ENCODE measurements at regions of chr9 and their contacts with region 1.

Region 1: DNA sequence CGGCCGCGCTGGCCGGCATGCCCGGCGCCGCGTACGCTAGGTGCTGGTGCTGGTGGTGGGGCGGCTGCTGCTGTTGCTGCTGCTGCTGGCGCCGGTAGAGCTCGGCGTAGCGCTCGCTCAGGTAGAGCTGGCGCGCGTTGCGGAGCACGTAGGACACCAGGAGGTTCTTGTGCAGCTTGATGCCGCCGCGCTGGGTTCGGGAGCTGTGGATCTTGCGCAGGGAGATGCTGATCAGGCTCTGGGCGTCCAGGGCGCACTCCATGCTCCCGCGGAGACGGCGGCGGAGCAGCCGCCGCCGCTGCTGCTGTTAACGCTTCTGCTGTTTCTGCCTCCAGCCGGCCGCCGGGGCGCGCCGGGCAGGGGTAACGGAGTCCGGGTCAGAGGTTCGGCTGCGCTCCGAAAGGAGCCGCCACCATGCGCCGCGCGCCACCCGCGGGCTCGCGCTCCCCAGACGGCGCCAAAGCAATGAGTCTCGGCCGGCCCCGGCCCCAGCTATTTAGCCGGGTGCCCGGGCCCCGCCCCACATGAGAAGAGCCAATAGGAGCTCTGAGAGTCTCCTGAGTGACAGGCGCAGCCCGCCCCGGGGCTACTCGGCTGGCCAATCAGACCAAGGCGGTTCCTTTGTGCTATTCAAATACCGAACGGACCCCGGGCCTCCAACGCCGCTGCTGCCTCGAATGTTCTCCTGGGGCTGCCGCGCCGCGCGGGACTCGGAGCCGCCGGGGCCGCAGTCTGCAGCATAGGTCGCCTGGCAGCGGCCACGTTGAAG is at the start of gene IER5L:
- DNase-seq: peak; percentile 92 to 96 (median 94)
- H3K4me3 ChIP-seq: peak within 1 kb of the TSS; percentile 93 to 98 (median 97)
- H3K4me3 Mint-ChIP-seq: peak within 1 kb of the TSS; percentile 98
- H3K27ac ChIP-seq: peak within 1 kb of the TSS in 1 of 2 donors; percentile 88
- H3K27ac Mint-ChIP-seq: peak within 1 kb of the TSS; percentile 54 to 94 (median 84)
- H3K4me1 ChIP-seq: peaks cover 27 to 36% of the 10 kb centered on the region in 2 donors
- H3K4me1 Mint-ChIP-seq: peaks cover 16% of the 10 kb centered on the region
- H3K27me3 ChIP-seq: peaks cover 0 to 8% of the 10 kb centered on the region in 2 donors
- H3K27me3 Mint-ChIP-seq: peaks cover 9 to 17% (median 16%) of the 10 kb centered on the region in 3 donors
- CTCF ChIP-seq: no peak
- polyA plus RNA-seq, gene IER5L: 0.36 to 15.5 (median 0.79) TPM

Region 2: GRCh38 chr9:129028192-129028957 is 149.6 kb before region 1 on chr9 and contains the start of gene SH3GLB2:
- intact Hi-C with region 1: no loop called
- DNase-seq: peak; percentile 92 to 97 (median 95)
- H3K4me3 ChIP-seq: peak within 1 kb of the TSS; percentile 47 to 78 (median 65)
- H3K4me3 Mint-ChIP-seq: peak within 1 kb of the TSS; percentile 71 to 85
- H3K27ac ChIP-seq: no peak within 1 kb of the TSS
- H3K27ac Mint-ChIP-seq: peak within 1 kb of the TSS in 1 of 7 donors; percentile 26
- H3K4me1 ChIP-seq: peaks cover 12 to 24% of the 10 kb centered on the region in 2 donors
- H3K4me1 Mint-ChIP-seq: peaks cover 20% of the 10 kb centered on the region
- H3K27me3 ChIP-seq: no peaks in the 10 kb centered on the region
- H3K27me3 Mint-ChIP-seq: no peaks in the 10 kb centered on the region
- CTCF ChIP-seq: peak; percentile 83
- polyA plus RNA-seq, gene SH3GLB2: 8.0 to 77.0 (median 25.9) TPM

Region 3: GRCh38 chr9:129139993-129140396 is 38.0 kb before region 1 on chr9:
- intact Hi-C with region 1: loop called (anchors 2 to 5 kb)
- DNase-seq: peak; percentile 94 to 98 (median 95)
- H3K4me3 ChIP-seq: peak overlapping the region; percentile 27 to 73 (median 32)
- H3K4me3 Mint-ChIP-seq: peak overlapping the region; percentile 79 to 92
- H3K27ac ChIP-seq: peak overlapping the region; percentile 97 to 99
- H3K27ac Mint-ChIP-seq: peak overlapping the region; percentile 96 to 98 (median 97)
- H3K4me1 ChIP-seq: peaks cover 37 to 47% of the 10 kb centered on the region in 2 donors
- H3K4me1 Mint-ChIP-seq: peaks cover 41% of the 10 kb centered on the region
- H3K27me3 ChIP-seq: no peaks in the 10 kb centered on the region
- H3K27me3 Mint-ChIP-seq: peaks cover 0 to 2% (median 0%) of the 10 kb centered on the region in 3 donors
- CTCF ChIP-seq: no peak

Region 4: GRCh38 chr9:129258124-129258822 is 80.3 kb after region 1 on chr9:
- intact Hi-C with region 1: loop called in 1 of 2 experiments (anchors 5 kb)
- DNase-seq: peak; percentile 85 to 94 (median 89)
- H3K4me3 ChIP-seq: peak overlapping the region in 1 of 3 experiments; percentile 60
- H3K4me3 Mint-ChIP-seq: peak overlapping the region; percentile 57 to 81
- H3K27ac ChIP-seq: no peak overlapping the region
- H3K27ac Mint-ChIP-seq: peak overlapping the region in 3 of 7 donors; percentile 15 to 75 (median 63)
- H3K4me1 ChIP-seq: peaks cover 28 to 31% of the 10 kb centered on the region in 2 donors
- H3K4me1 Mint-ChIP-seq: peaks cover 33% of the 10 kb centered on the region
- H3K27me3 ChIP-seq: peaks cover 9 to 22% of the 10 kb centered on the region in 2 donors
- H3K27me3 Mint-ChIP-seq: peaks cover 27 to 40% (median 27%) of the 10 kb centered on the region in 3 donors
- CTCF ChIP-seq: no peak

Region 5: GRCh38 chr9:129320575-129321263 is 142.7 kb after region 1 on chr9:
- intact Hi-C with region 1: loop called in 1 of 2 experiments (anchors 10 kb)
- DNase-seq: peak; percentile 77 to 90 (median 79)
- H3K4me3 ChIP-seq: peak overlapping the region; percentile 54 to 82 (median 55)
- H3K4me3 Mint-ChIP-seq: peak overlapping the region; percentile 86 to 96
- H3K27ac ChIP-seq: peak overlapping the region; percentile 49 to 94
- H3K27ac Mint-ChIP-seq: peak overlapping the region; percentile 90 to 99 (median 95)
- H3K4me1 ChIP-seq: peaks cover 34 to 52% of the 10 kb centered on the region in 2 donors
- H3K4me1 Mint-ChIP-seq: peaks cover 56% of the 10 kb centered on the region
- H3K27me3 ChIP-seq: no peaks in the 10 kb centered on the region
- H3K27me3 Mint-ChIP-seq: peaks cover 0 to 3% (median 1%) of the 10 kb centered on the region in 3 donors
- CTCF ChIP-seq: peak; percentile 43

Region 6: DNA sequence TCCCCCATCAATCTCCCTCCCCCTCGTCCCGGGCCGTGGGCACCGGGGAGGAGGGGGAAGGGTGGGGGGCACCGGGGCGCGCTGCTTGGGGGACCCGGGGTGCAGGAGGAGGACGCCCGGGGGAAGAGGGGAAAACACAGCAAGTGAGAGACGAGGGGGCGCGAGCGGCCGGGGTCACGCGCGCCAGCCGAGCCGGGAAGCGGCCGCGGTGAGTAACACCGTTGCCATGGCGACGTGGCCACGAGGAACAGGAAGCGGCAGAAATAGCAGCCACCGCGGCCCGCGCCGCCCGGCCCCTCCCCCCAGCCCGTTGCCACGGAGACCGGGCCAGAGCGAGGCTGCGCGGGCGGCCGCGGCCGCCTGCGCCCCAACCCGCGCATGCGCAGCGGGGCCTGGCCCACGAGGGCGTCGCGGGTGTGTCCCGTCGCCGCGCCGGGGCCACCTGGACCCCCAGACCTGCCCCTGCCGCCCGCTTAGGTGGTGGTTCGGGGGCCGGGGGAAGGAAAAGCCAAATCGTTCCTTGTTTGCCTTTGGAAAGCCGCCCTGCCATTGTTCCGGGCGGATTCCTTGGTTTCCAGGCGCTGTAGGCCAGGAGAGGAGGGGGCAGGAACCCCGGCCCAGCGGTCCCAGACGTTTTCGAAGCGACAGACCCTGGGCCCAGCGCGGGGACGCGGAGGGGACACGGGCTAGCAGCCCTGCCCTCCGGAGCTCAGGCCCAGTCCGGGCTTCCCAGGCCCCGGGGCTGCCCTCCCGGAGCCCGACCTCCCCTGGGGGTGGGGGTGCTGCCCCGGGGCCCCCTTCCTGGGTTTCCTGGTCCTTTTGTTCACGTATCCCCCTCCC is 235.8 kb after region 1 on chr9:
- intact Hi-C with region 1: loop called in 1 of 2 experiments (anchors 5 kb)
- DNase-seq: peak; percentile 98
- H3K4me3 ChIP-seq: peak overlapping the region; percentile 31 to 68 (median 49)
- H3K4me3 Mint-ChIP-seq: peak overlapping the region; percentile 74 to 87
- H3K27ac ChIP-seq: peak overlapping the region; percentile 98
- H3K27ac Mint-ChIP-seq: peak overlapping the region; percentile 97 to 99 (median 98)
- H3K4me1 ChIP-seq: peaks cover 48 to 49% of the 10 kb centered on the region in 2 donors
- H3K4me1 Mint-ChIP-seq: peaks cover 38% of the 10 kb centered on the region
- H3K27me3 ChIP-seq: no peaks in the 10 kb centered on the region
- H3K27me3 Mint-ChIP-seq: peaks cover 1 to 2% (median 2%) of the 10 kb centered on the region in 3 donors
- CTCF ChIP-seq: no peak

Region 7: DNA sequence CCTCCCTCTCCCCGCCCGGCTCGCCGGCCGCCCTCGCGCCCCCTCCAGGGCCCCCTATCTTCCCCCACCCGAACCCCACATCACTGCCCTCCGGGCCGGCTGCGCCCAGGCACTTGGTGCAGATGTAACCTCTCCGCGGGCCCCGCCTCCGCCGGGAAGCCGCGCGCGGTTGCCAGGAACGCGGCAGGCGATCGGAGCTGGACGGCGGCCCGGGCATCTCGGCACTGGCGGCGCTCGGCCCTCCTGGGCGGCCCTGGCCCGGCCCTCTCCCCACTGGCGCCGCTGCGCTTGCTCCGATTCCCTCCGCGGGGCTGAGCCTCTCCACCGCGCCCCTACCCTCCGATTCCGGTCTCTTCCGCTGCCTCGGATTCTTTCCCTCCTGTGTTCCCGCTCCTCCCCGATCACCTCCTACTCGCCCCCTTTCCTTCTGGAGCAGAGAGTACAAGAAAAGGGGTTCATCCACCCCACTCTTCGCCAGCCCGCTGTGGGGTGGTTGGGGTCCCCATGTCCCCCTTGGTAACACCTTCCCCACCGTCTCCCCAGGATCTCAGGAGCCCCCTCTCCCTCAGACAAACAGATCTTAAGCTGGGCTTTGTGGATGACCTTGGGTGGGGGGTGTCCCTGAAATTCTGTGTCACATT is 372.3 kb after region 1 on chr9:
- intact Hi-C with region 1: no loop called
- DNase-seq: peak in 1 of 3 donors; percentile 24
- H3K4me3 ChIP-seq: peak overlapping the region in 2 of 3 experiments; percentile 13 to 69
- H3K4me3 Mint-ChIP-seq: peak overlapping the region; percentile 64 to 91
- H3K27ac ChIP-seq: no peak overlapping the region
- H3K27ac Mint-ChIP-seq: peak overlapping the region in 2 of 7 donors; percentile 51 to 69
- H3K4me1 ChIP-seq: peaks cover 23 to 50% of the 10 kb centered on the region in 2 donors
- H3K4me1 Mint-ChIP-seq: peaks cover 31% of the 10 kb centered on the region
- H3K27me3 ChIP-seq: peaks cover 5 to 26% of the 10 kb centered on the region in 2 donors
- H3K27me3 Mint-ChIP-seq: peaks cover 28 to 42% (median 31%) of the 10 kb centered on the region in 3 donors
- CTCF ChIP-seq: no peak

Region 8: GRCh38 chr9:129626079-129626624 is 448.2 kb after region 1 on chr9 and contains the start of gene NTMT1:
- intact Hi-C with region 1: loop called in 1 of 2 experiments (anchors 5 kb)
- DNase-seq: peak; percentile 90 to 92 (median 90)
- H3K4me3 ChIP-seq: peak within 1 kb of the TSS; percentile 51 to 83 (median 75)
- H3K4me3 Mint-ChIP-seq: peak within 1 kb of the TSS; percentile 80 to 94
- H3K27ac ChIP-seq: peak within 1 kb of the TSS; percentile 86 to 97
- H3K27ac Mint-ChIP-seq: peak within 1 kb of the TSS; percentile 89 to 96 (median 93)
- H3K4me1 ChIP-seq: peaks cover 47 to 56% of the 10 kb centered on the region in 2 donors
- H3K4me1 Mint-ChIP-seq: peaks cover 64% of the 10 kb centered on the region
- H3K27me3 ChIP-seq: peaks cover 0 to 5% of the 10 kb centered on the region in 2 donors
- H3K27me3 Mint-ChIP-seq: peaks cover 5 to 9% (median 6%) of the 10 kb centered on the region in 3 donors
- CTCF ChIP-seq: no peak
- polyA plus RNA-seq, gene NTMT1: 16.0 to 43.9 (median 28.2) TPM